Right ventricle myocardium inferior (tissue), 1 donor: ENCODE measurements at regions of chr17 and their contacts with region 1.

Region 1: GRCh38 chr17:37239690-37240334 is 136.0 kb upstream of the C17orf78 start:
- DNase-seq: no peak
- ATAC-seq: peak; percentile 46

Region 2: GRCh38 chr17:36629252-36629847 is 610.5 kb before region 1 on chr17:
- intact Hi-C with region 1: loop called (anchors 2 kb)
- DNase-seq: peak; percentile 77
- ATAC-seq: peak; percentile 81

Region 3: GRCh38 chr17:37541880-37542660 is 302.3 kb after region 1 on chr17:
- intact Hi-C with region 1: no loop called
- DNase-seq: no peak
- ATAC-seq: no peak